GM12878 (cell line): ENCODE measurements at regions of chr5 and their contacts with region 1.

Region 1: GRCh38 chr5:108260117-108260857 is 121.6 kb downstream of the FBXL17 start:
- DNase-seq: peak; percentile 34
- ATAC-seq: peak; percentile 97
- H3K4me3 ChIP-seq: no peak overlapping the region
- H3K27ac ChIP-seq: no peak overlapping the region
- H3K4me1 ChIP-seq: no peaks in the 10 kb centered on the region
- H3K27me3 ChIP-seq: no peaks in the 10 kb centered on the region
- CTCF ChIP-seq: peak; percentile 91 to 94 (median 93)
- EP300 ChIP-seq: no peak
- POLR2A ChIP-seq: no peak
- RAD21 ChIP-seq: peak; percentile 89

Region 2: DNA sequence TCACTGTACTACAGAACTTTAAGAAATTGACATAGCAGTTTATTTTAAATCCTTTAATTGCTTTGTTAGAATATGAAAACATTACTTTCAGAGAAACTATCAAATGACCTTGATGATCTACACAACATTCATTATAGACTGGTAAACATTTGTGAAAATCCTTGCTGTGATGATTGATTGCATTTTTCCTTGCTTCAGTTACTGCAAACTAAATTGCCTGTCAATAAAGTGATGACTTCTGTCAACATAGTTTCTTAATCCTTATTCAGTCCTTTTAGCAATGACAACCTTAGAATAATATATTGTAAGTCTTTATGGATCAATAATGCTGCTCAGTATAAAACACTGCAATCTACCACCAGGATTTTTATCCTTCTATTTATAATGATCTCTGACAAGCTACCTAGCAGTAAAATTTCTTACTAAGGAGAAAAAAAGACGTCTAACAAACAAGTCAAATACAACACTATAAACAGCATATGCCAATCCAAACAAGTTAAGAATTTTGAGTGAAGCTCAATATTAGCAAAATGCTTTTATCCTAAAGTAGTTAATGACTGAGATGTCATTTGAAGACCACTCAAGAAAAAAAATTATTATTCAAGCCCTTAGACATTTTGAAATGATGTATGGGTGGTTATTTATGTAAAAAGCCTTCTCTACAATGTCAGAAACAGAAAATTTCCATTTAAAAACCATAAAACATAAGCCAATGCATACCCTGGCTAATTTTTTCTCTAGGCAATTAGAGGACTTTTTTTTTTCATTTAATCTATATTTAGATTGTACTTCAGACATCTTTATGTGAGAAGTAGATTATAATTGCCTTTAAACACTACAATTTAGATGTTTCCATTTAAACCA is 16.1 kb after region 1 on chr5:
- CTCF ChIA-PET with region 1: interaction called, 36 read pairs
- POLR2A ChIA-PET with region 1: no interaction called
- RAD21 ChIA-PET with region 1: interaction called, 7 read pairs
- SMC1A ChIA-PET with region 1: interaction called, 44 read pairs
- in situ Hi-C with region 1: no loop called
- intact Hi-C with region 1: no loop called
- DNase-seq: no peak
- ATAC-seq: no peak
- H3K4me3 ChIP-seq: no peak overlapping the region
- H3K27ac ChIP-seq: no peak overlapping the region
- H3K4me1 ChIP-seq: no peaks in the 10 kb centered on the region
- H3K27me3 ChIP-seq: no peaks in the 10 kb centered on the region
- CTCF ChIP-seq: no peak
- EP300 ChIP-seq: no peak
- POLR2A ChIP-seq: no peak
- RAD21 ChIP-seq: no peak

Region 3: DNA sequence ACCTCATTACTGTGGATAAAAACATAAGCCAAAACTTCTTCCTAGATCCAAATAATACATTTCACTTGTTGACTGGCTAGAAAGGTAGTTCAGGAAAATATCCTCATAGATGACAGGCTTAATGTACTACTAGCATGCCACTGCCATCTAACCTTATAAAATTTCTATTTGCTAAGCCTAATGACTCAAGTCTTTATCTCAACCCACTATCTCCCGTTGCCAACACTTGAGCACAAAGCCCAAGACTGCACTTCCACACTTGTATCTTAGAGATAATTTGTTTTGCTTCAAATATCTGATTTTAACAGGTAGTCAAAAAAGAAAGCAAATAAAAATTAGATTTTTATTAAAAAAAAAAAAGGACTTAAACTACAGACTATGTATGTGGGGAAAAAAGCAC is 78.9 kb after region 1 on chr5:
- CTCF ChIA-PET with region 1: interaction called, 142 read pairs
- POLR2A ChIA-PET with region 1: no interaction called
- RAD21 ChIA-PET with region 1: interaction called, 81 read pairs
- SMC1A ChIA-PET with region 1: interaction called, 88 read pairs
- in situ Hi-C with region 1: no loop called
- intact Hi-C with region 1: no loop called
- DNase-seq: no peak
- ATAC-seq: no peak
- H3K4me3 ChIP-seq: no peak overlapping the region
- H3K27ac ChIP-seq: no peak overlapping the region
- H3K4me1 ChIP-seq: no peaks in the 10 kb centered on the region
- H3K27me3 ChIP-seq: no peaks in the 10 kb centered on the region
- CTCF ChIP-seq: no peak
- EP300 ChIP-seq: no peak
- POLR2A ChIP-seq: no peak
- RAD21 ChIP-seq: no peak

Region 4: DNA sequence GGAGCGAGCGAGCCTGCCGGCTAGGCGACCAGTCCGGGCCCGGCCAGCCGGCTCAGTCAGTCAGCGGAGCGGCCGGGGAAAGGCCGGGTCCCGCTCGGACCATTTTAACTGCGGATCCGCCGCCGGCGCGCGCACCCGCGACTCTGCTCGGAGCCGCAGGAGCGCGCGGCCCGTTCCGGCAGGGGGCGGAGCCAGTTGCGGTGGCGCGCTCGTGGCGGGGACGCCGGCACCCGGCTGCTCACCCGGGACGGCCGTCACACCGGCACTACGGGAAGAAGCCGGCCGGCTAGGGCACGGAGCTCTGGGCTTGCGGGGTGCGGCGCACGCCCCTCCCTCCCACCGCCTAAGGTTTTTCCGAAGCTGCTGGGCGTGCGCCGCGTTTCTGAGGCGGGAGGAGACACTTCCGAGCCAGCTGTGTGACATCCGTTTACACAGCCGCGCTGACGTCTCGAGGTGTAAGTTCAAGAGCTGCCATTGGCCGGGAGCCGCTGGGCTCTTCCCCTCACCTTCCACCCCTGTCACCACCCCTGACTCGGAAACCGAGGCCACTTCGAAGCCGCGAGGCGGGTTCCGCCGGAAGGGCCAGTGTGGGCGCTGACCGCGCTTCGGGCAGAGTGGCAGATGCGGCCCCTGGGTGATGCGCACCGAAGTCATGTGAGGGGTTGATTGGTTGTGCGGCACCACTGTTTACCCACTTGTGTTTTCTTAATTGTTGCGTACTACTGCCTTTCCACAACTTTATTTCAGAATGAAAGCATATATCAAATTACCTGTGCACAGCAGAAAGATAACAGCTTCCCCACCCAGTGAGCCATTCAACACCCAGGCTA is 121.9 kb after region 1 on chr5 and contains the start of gene FBXL17:
- CTCF ChIA-PET with region 1: interaction called, 5 read pairs
- POLR2A ChIA-PET with region 1: no interaction called
- RAD21 ChIA-PET with region 1: interaction called, 11 read pairs
- SMC1A ChIA-PET with region 1: interaction called, 5 read pairs
- in situ Hi-C with region 1: no loop called
- intact Hi-C with region 1: no loop called
- DNase-seq: peak; percentile 73
- ATAC-seq: peak; percentile 82
- H3K4me3 ChIP-seq: peak within 1 kb of the TSS; percentile 76
- H3K27ac ChIP-seq: peak within 1 kb of the TSS; percentile 94
- H3K4me1 ChIP-seq: 0 out of 2 replicates have a peak, but pooled peaks cover 2% of the 10 kb centered on the region
- H3K27me3 ChIP-seq: no peaks in the 10 kb centered on the region
- CTCF ChIP-seq: no peak
- EP300 ChIP-seq: peak; percentile 28 to 54; a peak in 1 of 4 replicates
- POLR2A ChIP-seq: peak; percentile 91
- RAD21 ChIP-seq: no peak
- polyA plus RNA-seq, gene FBXL17: 0.88 to 2.1 TPM